ENCODE measurements at regions of chr12 and their contacts with region 1.

Region 1: DNA sequence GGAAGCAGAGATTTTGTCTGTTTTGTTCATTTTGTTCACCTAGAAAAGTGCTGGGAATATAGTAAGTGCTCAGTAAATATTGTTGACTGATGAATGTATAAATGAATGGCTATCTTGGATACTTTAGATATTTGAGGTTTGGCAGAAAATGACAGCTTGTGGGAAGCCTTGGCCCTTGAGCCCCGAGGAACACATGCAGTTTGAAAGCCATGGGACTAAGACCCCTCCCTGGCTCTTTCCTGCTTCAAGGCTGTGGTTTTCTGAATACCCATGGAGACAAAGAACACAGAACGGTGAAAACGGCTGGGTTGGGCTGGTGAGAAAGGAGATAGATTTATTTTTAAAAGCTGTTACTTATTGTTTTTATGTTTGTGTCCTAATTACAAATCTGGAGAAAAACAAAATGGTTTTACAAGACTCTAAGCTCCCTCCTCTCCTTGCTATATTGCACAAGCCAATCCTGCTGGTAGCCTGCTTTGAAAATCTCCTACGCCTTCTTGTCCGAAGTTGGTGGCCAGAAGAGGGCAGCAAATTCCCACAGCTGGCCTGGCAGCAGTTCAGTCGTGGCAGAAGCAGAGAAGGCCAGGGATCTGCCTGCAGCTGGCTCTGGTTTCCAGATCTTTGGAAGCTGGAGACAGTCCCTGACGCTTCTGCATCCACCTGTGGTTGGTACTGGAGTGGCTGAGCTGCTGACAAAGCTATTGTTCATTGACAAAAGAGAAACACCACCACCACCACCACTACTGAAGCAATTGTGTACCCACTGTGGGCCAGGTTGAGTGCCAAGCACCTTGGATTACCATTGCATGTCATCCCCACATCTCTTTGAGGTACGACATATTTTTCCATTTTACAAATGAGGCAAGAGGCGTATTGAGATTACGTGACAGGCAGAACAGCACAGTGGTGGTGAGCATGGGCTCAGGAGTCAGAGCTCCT is 5.2 kb upstream of the KRT85 start:
- DNase-seq: peak; percentile 71
- ATAC-seq: peak; percentile 95
- H3K4me3 ChIP-seq: no peak overlapping the region
- H3K27ac ChIP-seq: no peak overlapping the region
- H3K4me1 ChIP-seq: no peaks in the 10 kb centered on the region; the same call in 1 of the 2 replicates
- H3K27me3 ChIP-seq: no peaks in the 10 kb centered on the region
- CTCF ChIP-seq: peak; percentile 93

Region 2: GRCh38 chr12:52156736-52157565 is 215.5 kb before region 1 on chr12:
- CTCF ChIA-PET with region 1: no interaction called
- POLR2A ChIA-PET with region 1: no interaction called
- in situ Hi-C with region 1: no loop called
- intact Hi-C with region 1: loop called (anchors 10 kb)
- DNase-seq: no peak
- ATAC-seq: peak; percentile 82
- H3K4me3 ChIP-seq: no peak overlapping the region
- H3K27ac ChIP-seq: peak overlapping the region; percentile 18; the same call in 1 of the 2 replicates
- H3K4me1 ChIP-seq: peaks cover 15% of the 10 kb centered on the region
- H3K27me3 ChIP-seq: no peaks in the 10 kb centered on the region
- CTCF ChIP-seq: peak; percentile 95

Region 3: DNA sequence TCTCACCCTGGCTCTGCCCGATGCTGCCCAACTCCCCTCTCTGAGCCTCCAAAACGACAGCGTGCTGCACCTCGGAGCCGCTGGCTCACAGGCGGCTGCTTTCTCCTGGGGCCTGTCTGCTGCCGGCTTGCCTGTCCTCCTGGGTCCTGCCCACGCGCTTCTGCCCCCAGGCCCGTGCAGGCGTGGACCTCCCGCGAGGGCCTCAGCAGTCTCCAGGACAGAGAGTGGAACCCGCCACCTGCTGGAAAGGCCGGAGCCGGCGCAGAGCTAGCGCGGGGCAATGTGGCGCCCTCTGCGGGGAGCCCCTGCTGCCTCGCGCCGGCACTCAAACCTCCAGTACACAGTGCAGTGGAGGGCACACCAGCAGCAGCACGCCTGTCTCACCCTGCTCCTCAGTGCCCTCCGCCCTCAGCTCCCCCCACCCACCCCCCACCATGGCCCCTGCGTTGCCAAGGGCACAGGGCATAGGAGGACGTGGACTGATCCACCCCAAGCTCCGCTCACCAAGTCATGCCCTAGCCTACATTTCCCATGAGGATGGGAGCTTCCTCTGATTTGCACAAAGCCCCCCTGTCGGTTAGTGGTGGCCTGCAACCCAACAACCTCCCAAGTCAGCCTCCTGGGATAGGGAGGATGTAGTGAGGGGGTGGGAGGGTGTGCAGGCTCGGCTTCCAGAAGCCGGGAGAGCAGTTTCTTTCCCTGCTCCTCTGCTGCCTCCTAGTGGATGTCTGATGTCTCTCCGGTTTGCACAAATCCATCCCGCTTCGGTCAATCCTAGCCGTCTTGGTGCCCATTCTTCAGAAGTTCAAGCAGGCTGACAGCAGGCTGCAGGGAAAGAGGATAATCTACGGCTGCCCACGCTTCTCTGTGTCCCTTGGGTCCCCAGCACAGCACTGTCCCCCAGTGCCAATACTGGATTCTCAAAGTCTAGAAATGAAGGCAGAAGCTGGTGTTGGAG is 507.2 kb after region 1 on chr12:
- CTCF ChIA-PET with region 1: interaction called, 19 read pairs
- POLR2A ChIA-PET with region 1: no interaction called
- in situ Hi-C with region 1: no loop called
- intact Hi-C with region 1: loop called (anchors 5 kb)
- DNase-seq: peak; percentile 77
- ATAC-seq: peak; percentile 92
- H3K4me3 ChIP-seq: peak overlapping the region; percentile 32 to 66
- H3K27ac ChIP-seq: peak overlapping the region; percentile 52; the same call in 1 of the 2 replicates
- H3K4me1 ChIP-seq: peaks cover 14% of the 10 kb centered on the region
- H3K27me3 ChIP-seq: no peaks in the 10 kb centered on the region
- CTCF ChIP-seq: peak; percentile 98

Measured in Panc1 (cell line).